Body of pancreas (tissue), 4 donors: ENCODE measurements at regions of chr12 and their contacts with region 1.

Region 1: GRCh38 chr12:95733141-95733825 is 57.3 kb downstream of the NTN4 start:
- DNase-seq: peak in 1 of 4 donors; percentile 14
- ATAC-seq: no peak
- H3K4me3 ChIP-seq: no peak overlapping the region
- H3K27ac ChIP-seq: peak overlapping the region; percentile 42 to 60 (median 48)
- H3K4me1 ChIP-seq: peaks cover 67% of the 10 kb centered on the region
- H3K27me3 ChIP-seq: no peaks in the 10 kb centered on the region
- CTCF ChIP-seq: no peak
- POLR2A ChIP-seq: no peak

Region 2: DNA sequence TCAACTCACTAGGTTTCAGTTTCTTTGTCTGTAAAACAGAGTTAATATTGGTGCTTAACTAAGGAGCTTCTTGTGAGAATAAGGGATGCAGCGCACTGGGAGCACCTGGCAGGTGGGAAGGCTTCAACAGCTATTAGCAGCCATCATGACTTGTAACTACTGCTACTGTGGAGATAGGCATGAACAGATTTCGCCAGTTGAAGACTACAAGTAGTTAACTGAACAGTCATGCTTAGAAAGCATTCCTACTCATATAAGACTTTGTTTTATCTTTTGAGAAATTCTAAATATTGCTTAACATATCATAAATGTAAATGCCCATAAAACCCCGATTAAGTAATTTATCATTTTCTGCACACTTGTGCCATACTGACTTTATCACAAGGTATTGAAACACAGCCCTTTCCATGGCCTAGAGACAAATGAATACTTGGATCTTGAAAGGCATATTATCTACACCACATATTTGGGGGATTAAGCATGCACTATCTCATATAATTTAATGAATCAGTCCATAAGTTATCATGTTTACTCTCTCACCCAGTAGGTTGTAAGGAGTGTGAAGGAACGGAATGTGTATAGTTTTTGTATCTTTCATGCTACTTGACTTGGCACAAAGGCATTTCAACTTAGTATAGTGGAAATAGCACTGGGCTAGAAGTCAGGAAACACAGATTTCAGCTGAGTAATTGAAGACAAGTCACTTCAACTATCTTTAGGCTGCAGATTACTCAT is 41.2 kb after region 1 on chr12:
- intact Hi-C with region 1: no loop called
- DNase-seq: no peak
- ATAC-seq: no peak
- H3K4me3 ChIP-seq: no peak overlapping the region
- H3K27ac ChIP-seq: no peak overlapping the region
- H3K4me1 ChIP-seq: no peaks in the 10 kb centered on the region
- H3K27me3 ChIP-seq: no peaks in the 10 kb centered on the region
- CTCF ChIP-seq: no peak
- POLR2A ChIP-seq: no peak

Region 3: DNA sequence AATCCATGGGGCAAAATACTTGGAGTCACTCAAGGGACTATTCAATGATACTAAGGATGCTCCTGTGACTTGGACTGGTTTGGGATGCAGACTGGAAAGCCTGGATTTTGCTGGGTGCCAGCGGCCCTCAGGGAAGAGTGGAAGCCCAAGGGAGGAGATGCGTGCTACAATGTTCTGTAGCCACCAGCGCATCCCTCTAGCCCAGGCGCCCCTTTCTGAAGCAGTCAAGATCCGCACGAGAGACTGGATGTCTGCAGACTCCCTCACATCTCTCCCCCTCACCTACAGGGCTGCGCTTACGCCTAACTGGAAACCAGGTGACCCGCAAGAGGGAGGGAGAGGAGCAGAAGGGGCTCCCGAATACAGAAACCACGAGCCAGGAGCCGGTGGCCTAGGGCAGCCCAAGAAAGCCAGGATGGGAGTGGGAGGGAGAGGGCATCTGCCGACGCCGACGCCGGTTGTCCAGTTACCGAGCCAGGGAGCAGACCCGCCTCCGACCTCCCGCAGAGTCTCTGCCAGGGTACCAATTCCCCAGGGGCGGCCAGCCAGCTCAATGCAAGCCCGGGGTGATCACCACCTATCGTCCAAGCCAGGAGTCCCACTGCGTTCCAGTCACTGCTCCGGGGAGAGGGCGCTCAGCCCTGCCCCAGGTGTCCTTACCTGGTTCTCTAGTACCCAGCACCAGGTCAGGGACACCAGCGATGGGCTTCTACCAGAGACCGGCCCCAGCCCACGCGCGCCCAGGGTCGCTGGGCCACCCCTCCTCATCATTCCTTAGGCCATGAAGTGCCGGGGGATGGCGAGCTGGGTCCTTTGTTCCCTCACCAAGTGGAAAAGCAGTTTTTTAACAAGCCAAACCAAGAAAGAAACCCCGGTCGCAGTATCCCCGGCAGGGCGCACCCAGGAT is 56.1 kb after region 1 on chr12:
- intact Hi-C with region 1: loop called (anchors 10 kb)
- DNase-seq: peak; percentile 65 to 72 (median 68)
- ATAC-seq: peak; percentile 47
- H3K4me3 ChIP-seq: peak overlapping the region; percentile 76 to 79
- H3K27ac ChIP-seq: peak overlapping the region; percentile 85 to 95 (median 88)
- H3K4me1 ChIP-seq: peaks cover 54% of the 10 kb centered on the region
- H3K27me3 ChIP-seq: no peaks in the 10 kb centered on the region
- CTCF ChIP-seq: peak in 2 of 7 experiments; percentile 19 to 23
- POLR2A ChIP-seq: peak in 2 of 3 donors; percentile 59 to 68